ENCODE measurements at regions of chr16 and their contacts with region 1.

Region 1: DNA sequence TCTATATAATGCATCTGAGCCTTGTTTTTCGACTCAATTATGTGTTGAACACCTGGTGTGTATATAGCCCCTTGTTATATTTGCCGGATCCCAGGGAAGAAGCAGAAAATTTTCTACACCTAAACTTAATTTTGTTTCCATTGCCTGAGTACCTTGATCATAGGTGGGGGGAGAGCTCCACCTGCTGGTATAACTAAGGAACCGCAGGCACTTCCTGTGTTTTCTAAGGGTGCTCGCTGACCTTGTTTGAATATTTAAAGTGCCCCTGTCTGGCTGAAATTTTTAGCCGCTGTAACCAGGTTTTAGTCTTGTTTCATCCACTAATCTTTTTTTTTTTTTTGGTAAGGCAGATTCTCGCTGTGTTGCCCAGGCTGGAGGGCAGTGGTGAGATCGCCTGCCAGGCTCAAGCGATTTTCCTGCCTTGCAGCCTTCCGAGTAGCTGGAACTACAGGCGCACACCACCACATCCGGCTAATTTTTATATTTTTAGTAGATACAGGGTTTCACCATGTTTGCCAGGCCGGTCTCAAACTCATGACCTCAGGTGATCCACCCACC is 6.5 kb upstream of the NUBP1 start:
- DNase-seq: peak; percentile 92
- H3K4me3 Mint-ChIP-seq: peak overlapping the region; percentile 48
- H3K27ac Mint-ChIP-seq: no peak overlapping the region
- H3K4me1 Mint-ChIP-seq: peaks cover 34% of the 10 kb centered on the region
- H3K27me3 Mint-ChIP-seq: peaks cover 5% of the 10 kb centered on the region

Region 2: GRCh38 chr16:10256784-10257641 is 480.1 kb before region 1 on chr16:
- intact Hi-C with region 1: loop called (anchors 2 kb)
- DNase-seq: peak; percentile 77
- H3K4me3 Mint-ChIP-seq: no peak overlapping the region
- H3K27ac Mint-ChIP-seq: no peak overlapping the region
- H3K4me1 Mint-ChIP-seq: peaks cover 4% of the 10 kb centered on the region
- H3K27me3 Mint-ChIP-seq: peaks cover 1% of the 10 kb centered on the region

Region 3: GRCh38 chr16:10314811-10315210 is 422.3 kb before region 1 on chr16:
- intact Hi-C with region 1: loop called (anchors 2 kb)
- DNase-seq: peak; percentile 61
- H3K4me3 Mint-ChIP-seq: no peak overlapping the region
- H3K27ac Mint-ChIP-seq: no peak overlapping the region
- H3K4me1 Mint-ChIP-seq: peaks cover 15% of the 10 kb centered on the region
- H3K27me3 Mint-ChIP-seq: no peaks in the 10 kb centered on the region

Region 4: DNA sequence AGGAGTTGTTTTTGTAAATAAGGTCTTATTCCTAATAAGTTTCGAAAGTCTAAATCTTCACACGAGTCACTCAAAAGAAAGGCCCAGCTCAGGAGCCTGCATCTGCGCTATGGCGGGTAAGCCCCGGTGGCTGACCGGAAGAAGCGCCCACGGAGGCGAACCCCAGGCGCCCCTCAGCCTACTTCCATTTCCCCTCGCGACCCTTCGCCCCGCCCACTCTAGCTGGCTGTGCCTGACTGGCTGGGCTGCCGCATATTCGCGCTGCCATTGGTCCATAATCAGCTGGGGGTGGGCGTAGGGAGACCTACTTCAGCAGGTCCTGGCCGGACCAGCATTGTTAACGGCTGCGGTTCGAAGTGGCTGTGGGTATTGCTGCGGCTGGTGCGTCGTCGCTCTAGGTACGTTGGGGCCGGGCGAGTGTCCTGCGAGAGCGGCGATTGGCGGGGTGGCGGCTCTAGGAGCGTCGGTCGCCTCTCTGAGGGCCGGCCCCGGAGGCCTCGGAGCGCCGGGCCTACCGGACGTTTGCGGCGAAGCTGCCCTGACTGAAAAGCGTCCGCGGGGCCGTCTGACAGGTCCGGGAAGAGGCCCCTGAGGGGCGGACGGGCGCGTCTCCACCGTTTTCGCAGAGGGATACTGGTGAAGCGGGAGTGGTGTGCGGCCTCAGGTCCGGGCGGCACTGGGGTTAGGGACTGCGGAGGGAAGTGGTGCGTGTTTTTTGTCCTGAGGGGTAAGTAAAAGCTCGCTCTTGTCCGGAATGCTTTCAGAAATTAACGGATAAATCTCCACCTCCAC is 351.2 kb before region 1 on chr16 and contains the start of gene ATF7IP2:
- intact Hi-C with region 1: loop called (anchors 5 kb)
- DNase-seq: peak; percentile 96
- H3K4me3 Mint-ChIP-seq: peak within 1 kb of the TSS; percentile 96
- H3K27ac Mint-ChIP-seq: peak within 1 kb of the TSS; percentile 97
- H3K4me1 Mint-ChIP-seq: peaks cover 33% of the 10 kb centered on the region
- H3K27me3 Mint-ChIP-seq: no peaks in the 10 kb centered on the region
- total RNA-seq, gene ATF7IP2: 22.3 and 23.4 TPM in 2 replicates

Region 5: DNA sequence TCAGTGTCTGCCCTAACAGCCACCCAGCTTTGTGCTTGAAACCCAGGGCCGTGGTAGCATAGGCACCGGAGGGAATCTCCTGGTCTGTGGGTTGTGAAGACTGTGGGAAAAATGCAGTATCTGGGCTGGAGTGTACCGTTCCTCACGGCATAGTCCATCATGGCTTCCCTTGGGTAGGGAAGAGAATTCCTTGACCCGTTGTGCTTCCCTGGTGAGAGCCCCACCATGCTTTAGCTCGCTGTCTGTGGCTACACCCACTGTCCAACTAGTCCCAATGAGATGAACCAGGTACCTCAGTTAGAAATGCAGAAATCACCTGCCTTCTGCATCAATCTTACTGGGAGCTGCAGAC is 284.0 kb before region 1 on chr16:
- intact Hi-C with region 1: no loop called
- DNase-seq: no peak
- H3K4me3 Mint-ChIP-seq: no peak overlapping the region
- H3K27ac Mint-ChIP-seq: no peak overlapping the region
- H3K4me1 Mint-ChIP-seq: peaks cover 16% of the 10 kb centered on the region
- H3K27me3 Mint-ChIP-seq: no peaks in the 10 kb centered on the region

Region 6: GRCh38 chr16:10509534-10510025 is 227.6 kb before region 1 on chr16:
- intact Hi-C with region 1: loop called (anchors 1 kb)
- DNase-seq: peak; percentile 90
- H3K4me3 Mint-ChIP-seq: no peak overlapping the region
- H3K27ac Mint-ChIP-seq: no peak overlapping the region
- H3K4me1 Mint-ChIP-seq: peaks cover 15% of the 10 kb centered on the region
- H3K27me3 Mint-ChIP-seq: peaks cover 8% of the 10 kb centered on the region

Region 7: DNA sequence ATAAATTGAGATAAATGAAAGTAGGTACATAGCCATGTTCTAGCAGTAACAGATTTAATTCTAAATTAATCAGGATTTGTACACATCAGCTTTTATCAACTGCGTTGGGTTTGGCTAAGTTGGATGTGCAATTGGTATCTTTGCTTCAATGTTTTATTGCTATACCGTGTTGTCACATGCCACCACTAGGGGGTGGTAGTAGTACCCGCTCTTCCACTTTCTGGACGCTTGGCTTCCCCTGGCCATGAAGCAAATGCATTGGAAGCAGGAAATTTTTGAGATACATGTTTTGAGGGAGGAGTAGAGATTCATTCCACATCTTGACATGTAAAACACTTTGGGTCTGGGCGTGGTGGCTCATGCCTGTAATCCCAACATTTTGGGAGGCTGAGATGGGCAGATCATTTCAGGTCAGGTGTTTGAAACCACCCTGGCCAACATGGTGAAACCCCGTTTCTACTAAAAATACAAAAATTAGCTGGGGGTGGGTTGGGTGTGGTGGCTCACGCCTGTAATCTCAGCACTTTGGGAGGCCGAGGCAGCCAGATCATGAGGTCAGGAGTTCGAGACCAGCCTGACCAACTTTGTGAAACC is 215.4 kb before region 1 on chr16:
- intact Hi-C with region 1: loop called (anchors 1 kb)
- DNase-seq: peak; percentile 82
- H3K4me3 Mint-ChIP-seq: no peak overlapping the region
- H3K27ac Mint-ChIP-seq: no peak overlapping the region
- H3K4me1 Mint-ChIP-seq: peaks cover 3% of the 10 kb centered on the region
- H3K27me3 Mint-ChIP-seq: no peaks in the 10 kb centered on the region

Region 8: DNA sequence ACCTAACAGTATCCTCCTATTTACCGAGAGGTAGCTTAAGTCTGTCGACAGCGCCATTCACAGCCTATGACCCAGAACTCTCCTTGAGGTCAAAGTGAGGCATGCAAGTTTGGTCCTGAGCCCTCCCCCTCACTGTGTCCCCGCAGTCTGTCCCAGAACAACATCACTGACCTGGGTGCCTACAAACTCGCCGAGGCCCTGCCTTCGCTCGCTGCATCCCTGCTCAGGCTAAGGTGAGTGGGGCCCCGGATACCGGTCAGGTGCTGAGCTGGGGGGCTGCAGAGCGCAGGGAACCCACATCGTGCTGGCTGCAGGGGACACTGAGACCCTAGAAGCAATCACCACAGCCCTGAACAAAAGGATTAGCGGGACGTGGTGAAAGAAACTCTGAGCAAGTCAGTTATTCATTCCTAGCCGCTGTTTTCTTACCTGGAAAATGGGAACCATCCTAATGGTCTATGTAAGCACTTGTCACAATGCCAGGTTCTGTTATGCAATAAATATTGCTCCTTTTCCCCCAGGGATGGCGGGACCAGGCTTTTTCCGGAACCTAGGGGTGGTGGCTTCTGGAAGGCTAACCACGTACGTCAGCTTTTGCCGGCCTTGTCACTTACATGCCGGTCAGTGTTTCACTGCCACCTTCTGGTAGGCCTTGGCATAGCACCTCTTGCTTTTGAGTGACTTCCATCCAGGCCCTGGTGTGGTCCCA is 181.3 kb after region 1 on chr16:
- intact Hi-C with region 1: loop called (anchors 1 kb)
- DNase-seq: peak; percentile 94
- H3K4me3 Mint-ChIP-seq: no peak overlapping the region
- H3K27ac Mint-ChIP-seq: no peak overlapping the region
- H3K4me1 Mint-ChIP-seq: peaks cover 18% of the 10 kb centered on the region
- H3K27me3 Mint-ChIP-seq: peaks cover 4% of the 10 kb centered on the region